ENCODE measurements at regions of chr4 and their contacts with region 1.

Region 1: GRCh38 chr4:55554453-55555030 is 7.8 kb upstream of the CLOCK start:
- DNase-seq: peak; percentile 71
- ATAC-seq: peak; percentile 67
- H3K4me3 ChIP-seq: no peak overlapping the region
- H3K27ac ChIP-seq: no peak overlapping the region
- H3K4me1 ChIP-seq: 0 out of 2 replicates have a peak, but pooled peaks cover 2% of the 10 kb centered on the region
- H3K27me3 ChIP-seq: peaks cover 2% of the 10 kb centered on the region; the same call in 1 of the 2 replicates
- CTCF ChIP-seq: peak; percentile 72
- POLR2A ChIP-seq: no peak
- RAD21 ChIP-seq: peak; percentile 72

Region 2: GRCh38 chr4:54971474-54971950 is 583.0 kb before region 1 on chr4:
- CTCF ChIA-PET with region 1: interaction called, 5 read pairs
- POLR2A ChIA-PET with region 1: no interaction called
- dilution Hi-C with region 1: no loop called
- in situ Hi-C with region 1: no loop called
- intact Hi-C with region 1: loop called (anchors 5 kb)
- DNase-seq: peak; percentile 53
- ATAC-seq: peak; percentile 96
- H3K4me3 ChIP-seq: no peak overlapping the region
- H3K27ac ChIP-seq: no peak overlapping the region
- H3K4me1 ChIP-seq: no peaks in the 10 kb centered on the region
- H3K27me3 ChIP-seq: peaks cover 14% of the 10 kb centered on the region
- CTCF ChIP-seq: peak; percentile 57
- POLR2A ChIP-seq: no peak
- RAD21 ChIP-seq: peak; percentile 59

Region 3: DNA sequence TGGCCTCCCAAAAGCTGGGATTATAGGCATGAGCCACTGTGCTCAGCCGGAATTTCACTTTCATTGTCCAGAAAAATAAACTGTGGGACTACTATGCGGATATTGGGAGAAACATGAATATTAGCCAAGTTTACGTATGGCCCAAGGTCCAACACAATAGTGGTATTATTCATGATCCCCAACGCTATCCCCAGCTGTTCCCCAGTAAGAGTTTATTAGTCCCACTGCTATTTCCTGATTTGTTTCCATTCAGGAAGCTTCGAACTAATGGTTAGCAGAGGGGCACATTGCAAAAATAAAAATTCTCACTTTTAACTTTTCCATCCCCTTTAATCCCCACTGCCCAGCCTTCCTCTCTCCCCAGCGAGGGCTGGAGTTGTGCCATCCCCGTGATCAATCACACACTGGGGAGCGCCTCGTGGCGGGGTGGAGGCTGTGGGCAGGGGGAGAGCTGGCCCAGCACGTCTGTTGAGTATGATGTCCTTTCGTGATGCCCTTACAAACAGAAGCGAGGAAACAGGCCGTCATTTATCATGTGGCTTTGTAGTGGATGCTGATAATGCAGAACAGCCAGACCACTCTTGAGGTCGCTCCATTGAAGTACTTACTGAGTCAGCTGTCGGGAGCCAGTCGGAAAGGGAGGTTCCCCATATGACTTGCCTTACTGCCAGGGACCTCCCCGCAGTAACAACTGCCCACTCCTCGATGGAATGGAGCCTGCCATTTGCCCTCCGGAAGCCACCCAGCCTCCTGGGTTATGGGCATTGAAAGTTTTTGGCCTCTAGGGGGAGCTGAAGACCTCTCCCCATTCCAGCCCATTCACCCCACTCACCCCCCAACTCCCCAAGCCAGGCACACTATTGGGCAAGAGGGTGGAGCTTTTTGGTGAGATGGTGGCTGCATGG is 546.1 kb before region 1 on chr4:
- CTCF ChIA-PET with region 1: no interaction called
- POLR2A ChIA-PET with region 1: no interaction called
- dilution Hi-C with region 1: no loop called
- in situ Hi-C with region 1: loop called (anchors 25 kb)
- intact Hi-C with region 1: no loop called
- DNase-seq: no peak
- ATAC-seq: no peak
- H3K4me3 ChIP-seq: no peak overlapping the region
- H3K27ac ChIP-seq: no peak overlapping the region
- H3K4me1 ChIP-seq: no peaks in the 10 kb centered on the region
- H3K27me3 ChIP-seq: no peaks in the 10 kb centered on the region; the same call in 1 of the 2 replicates
- CTCF ChIP-seq: peak; percentile 18; the same call in 1 of the 2 replicates
- POLR2A ChIP-seq: no peak
- RAD21 ChIP-seq: peak; percentile 22; the same call in 1 of the 2 replicates

Region 4: DNA sequence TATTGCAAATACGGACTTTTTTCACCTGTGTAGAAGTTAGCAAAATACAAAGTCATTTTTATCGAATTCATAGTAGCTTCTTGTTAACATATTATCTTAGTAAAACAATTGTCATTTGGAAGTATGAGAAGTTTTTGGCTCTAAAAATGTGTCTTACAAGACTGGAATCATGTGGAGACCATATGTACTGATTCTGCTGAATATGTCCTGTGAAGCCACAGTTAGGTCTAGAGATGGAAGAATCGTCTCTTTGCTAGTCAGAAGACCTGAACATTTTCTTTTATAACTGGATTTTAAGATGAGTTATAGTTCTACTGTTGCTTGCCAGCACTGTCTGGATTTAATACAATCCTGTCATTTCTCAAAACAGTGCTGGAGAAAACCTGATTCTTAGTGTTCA is 129.8 kb before region 1 on chr4:
- CTCF ChIA-PET with region 1: no interaction called
- POLR2A ChIA-PET with region 1: no interaction called
- dilution Hi-C with region 1: no loop called
- in situ Hi-C with region 1: no loop called
- intact Hi-C with region 1: no loop called
- DNase-seq: no peak
- ATAC-seq: no peak
- H3K4me3 ChIP-seq: no peak overlapping the region
- H3K27ac ChIP-seq: no peak overlapping the region
- H3K4me1 ChIP-seq: 0 out of 2 replicates have a peak, but pooled peaks cover 2% of the 10 kb centered on the region
- H3K27me3 ChIP-seq: no peaks in the 10 kb centered on the region
- CTCF ChIP-seq: no peak
- POLR2A ChIP-seq: no peak
- RAD21 ChIP-seq: no peak

Region 5: GRCh38 chr4:55838356-55838755 is 283.8 kb after region 1 on chr4:
- CTCF ChIA-PET with region 1: no interaction called
- POLR2A ChIA-PET with region 1: no interaction called
- dilution Hi-C with region 1: no loop called
- in situ Hi-C with region 1: no loop called
- intact Hi-C with region 1: no loop called
- DNase-seq: peak; percentile 5
- ATAC-seq: no peak
- H3K4me3 ChIP-seq: no peak overlapping the region
- H3K27ac ChIP-seq: no peak overlapping the region
- H3K4me1 ChIP-seq: no peaks in the 10 kb centered on the region
- H3K27me3 ChIP-seq: no peaks in the 10 kb centered on the region
- CTCF ChIP-seq: no peak
- POLR2A ChIP-seq: no peak
- RAD21 ChIP-seq: no peak

Region 6: DNA sequence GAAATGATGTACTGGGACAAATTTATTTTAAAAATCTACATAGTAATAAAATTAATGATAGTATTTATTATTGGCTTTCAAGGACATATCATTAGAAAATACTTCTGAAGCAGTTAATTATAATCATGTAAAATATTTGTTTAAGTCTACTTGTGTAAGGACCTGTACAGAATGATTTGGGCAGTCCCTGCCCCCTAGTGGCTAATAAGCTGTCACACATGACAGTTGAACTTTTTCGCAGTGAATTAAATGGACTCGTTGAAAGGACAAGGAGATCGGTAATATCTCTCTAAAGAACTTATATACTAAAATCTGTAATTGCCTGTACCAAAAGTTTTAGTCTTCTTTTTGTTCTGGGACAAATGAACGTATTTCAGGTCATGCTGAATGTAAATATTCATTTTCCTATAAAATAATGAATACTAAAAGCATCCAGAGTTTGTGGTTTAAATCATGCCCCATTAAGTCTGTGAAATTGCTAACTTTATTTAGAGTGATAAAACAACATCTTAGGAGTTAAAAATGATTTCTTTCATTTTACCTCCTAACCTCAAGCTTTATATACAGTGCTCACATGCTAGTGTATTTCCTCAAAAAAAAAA is 312.5 kb after region 1 on chr4:
- CTCF ChIA-PET with region 1: no interaction called
- POLR2A ChIA-PET with region 1: no interaction called
- dilution Hi-C with region 1: no loop called
- in situ Hi-C with region 1: no loop called
- intact Hi-C with region 1: loop called (anchors 2 kb)
- DNase-seq: peak; percentile 74
- ATAC-seq: peak; percentile 75
- H3K4me3 ChIP-seq: no peak overlapping the region
- H3K27ac ChIP-seq: no peak overlapping the region
- H3K4me1 ChIP-seq: peaks cover 2% of the 10 kb centered on the region; the same call in 1 of the 2 replicates
- H3K27me3 ChIP-seq: no peaks in the 10 kb centered on the region
- CTCF ChIP-seq: peak; percentile 79
- POLR2A ChIP-seq: no peak
- RAD21 ChIP-seq: peak; percentile 62